Lower lobe of right lung (tissue), 2 donors: ENCODE measurements at regions of chr7 and their contacts with region 1.

Region 1: GRCh38 chr7:43572516-43573049 is 10.3 kb upstream of the STK17A start:
- DNase-seq: no peak
- ATAC-seq: peak; percentile 91 to 95
- H3K4me3 ChIP-seq: no peak overlapping the region
- H3K27ac ChIP-seq: no peak overlapping the region
- H3K4me1 ChIP-seq: no peaks in the 10 kb centered on the region
- H3K27me3 ChIP-seq: no peaks in the 10 kb centered on the region
- CTCF ChIP-seq: no peak

Region 2: GRCh38 chr7:43658718-43659548 is 86.3 kb after region 1 on chr7:
- intact Hi-C with region 1: no loop called
- DNase-seq: no peak
- ATAC-seq: peak in 1 of 2 donors; percentile 74
- H3K4me3 ChIP-seq: no peak overlapping the region
- H3K27ac ChIP-seq: no peak overlapping the region
- H3K4me1 ChIP-seq: peaks cover 11% of the 10 kb centered on the region
- H3K27me3 ChIP-seq: no peaks in the 10 kb centered on the region
- CTCF ChIP-seq: no peak

Region 3: DNA sequence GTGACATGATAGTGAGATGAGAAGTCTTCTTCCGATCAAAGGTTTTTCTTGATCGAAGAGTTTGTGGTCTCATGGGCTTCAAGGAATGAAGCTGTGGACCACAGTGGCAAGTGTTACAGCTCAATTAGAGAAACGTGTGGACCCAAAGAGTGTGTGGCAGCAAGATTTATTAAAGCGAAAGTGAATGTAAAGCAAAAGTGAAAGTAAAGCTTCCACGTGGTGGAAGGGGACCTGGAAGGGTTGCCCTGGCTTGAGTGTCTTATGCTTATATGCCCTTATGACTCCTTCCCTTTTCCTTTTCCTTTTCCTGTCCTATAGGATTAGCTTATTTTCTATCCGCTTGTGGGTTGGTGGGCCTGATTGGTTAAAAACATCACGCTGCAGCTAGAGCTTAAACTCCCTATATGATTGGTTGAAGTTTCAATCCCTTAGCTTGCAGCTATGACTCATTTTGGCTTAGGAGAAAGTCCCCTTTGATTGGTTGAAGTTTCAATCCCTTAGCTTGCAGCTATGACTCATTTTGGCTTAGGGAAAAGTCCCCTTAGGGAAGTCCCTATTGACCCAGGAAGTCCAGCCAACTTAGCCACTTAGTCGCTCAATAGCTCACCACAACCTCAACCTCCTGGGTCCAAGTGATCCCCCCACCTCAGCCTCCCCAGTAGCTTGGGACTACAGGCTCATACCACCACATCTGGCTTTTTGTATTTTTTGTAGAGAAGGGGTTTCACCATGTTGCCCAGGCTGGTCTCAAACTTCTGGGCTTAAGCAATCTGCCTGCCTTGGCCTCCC is 262.1 kb after region 1 on chr7:
- intact Hi-C with region 1: loop called (anchors 10 kb)
- DNase-seq: no peak
- ATAC-seq: peak; percentile 27 to 62
- H3K4me3 ChIP-seq: peak overlapping the region; percentile 45
- H3K27ac ChIP-seq: no peak overlapping the region
- H3K4me1 ChIP-seq: peaks cover 6% of the 10 kb centered on the region
- H3K27me3 ChIP-seq: no peaks in the 10 kb centered on the region
- CTCF ChIP-seq: no peak